Caco-2 (cell line): ENCODE measurements at regions of chr2 and their contacts with region 1.

Region 1: DNA sequence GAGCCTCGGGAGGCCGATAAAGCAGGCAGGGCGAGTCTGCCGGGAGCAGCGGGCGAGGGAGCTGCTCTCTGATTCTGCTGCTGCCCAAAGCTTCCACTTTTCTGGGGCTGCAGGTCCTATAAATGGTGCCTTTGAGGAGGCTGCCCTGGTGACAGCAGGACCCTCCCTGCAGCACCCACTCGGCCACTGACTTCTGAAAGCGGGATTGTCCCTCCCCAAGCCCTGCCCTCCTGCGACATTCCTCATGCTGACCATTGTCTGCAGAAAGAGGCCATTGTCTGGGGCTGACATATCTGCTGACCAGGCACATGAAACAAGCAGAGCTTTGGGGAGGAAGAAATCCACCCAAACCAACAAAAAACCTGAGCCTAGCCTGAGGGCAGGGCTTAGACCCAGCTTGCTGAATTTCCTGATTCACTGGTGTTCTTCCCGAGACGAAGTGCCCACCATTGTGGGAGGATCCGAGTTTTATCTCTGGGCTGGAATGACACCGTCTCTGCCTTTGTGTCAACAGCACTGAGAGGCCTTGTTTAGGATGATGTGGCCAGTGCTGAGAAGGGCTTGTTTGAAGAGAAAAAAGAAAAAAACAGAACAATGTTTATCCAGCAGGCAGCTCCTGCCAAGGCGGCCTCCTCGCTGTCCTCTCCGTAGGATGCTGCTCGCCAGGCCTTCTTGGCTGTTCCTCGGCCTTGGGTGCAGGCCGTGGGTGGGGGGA is 129.7 kb downstream of the MYCN start:
- DNase-seq: peak; percentile 68 to 77
- H3K4me3 ChIP-seq: no peak overlapping the region
- H3K4me3 Mint-ChIP-seq: no peak overlapping the region
- H3K27ac Mint-ChIP-seq: peak overlapping the region; percentile 81
- H3K4me1 ChIP-seq: peaks cover 45% of the 10 kb centered on the region
- H3K4me1 Mint-ChIP-seq: peaks cover 34% of the 10 kb centered on the region
- H3K27me3 ChIP-seq: no peaks in the 10 kb centered on the region
- H3K27me3 Mint-ChIP-seq: no peaks in the 10 kb centered on the region
- CTCF ChIP-seq: no peak

Region 2: GRCh38 chr2:16040271-16041010 is 29.6 kb before region 1 on chr2:
- CTCF ChIA-PET with region 1: no interaction called
- POLR2A ChIA-PET with region 1: no interaction called
- intact Hi-C with region 1: no loop called
- DNase-seq: no peak
- H3K4me3 ChIP-seq: no peak overlapping the region
- H3K4me3 Mint-ChIP-seq: no peak overlapping the region
- H3K27ac Mint-ChIP-seq: no peak overlapping the region
- H3K4me1 ChIP-seq: no peaks in the 10 kb centered on the region
- H3K4me1 Mint-ChIP-seq: peaks cover 9% of the 10 kb centered on the region
- H3K27me3 ChIP-seq: no peaks in the 10 kb centered on the region
- H3K27me3 Mint-ChIP-seq: no peaks in the 10 kb centered on the region
- CTCF ChIP-seq: no peak

Region 3: DNA sequence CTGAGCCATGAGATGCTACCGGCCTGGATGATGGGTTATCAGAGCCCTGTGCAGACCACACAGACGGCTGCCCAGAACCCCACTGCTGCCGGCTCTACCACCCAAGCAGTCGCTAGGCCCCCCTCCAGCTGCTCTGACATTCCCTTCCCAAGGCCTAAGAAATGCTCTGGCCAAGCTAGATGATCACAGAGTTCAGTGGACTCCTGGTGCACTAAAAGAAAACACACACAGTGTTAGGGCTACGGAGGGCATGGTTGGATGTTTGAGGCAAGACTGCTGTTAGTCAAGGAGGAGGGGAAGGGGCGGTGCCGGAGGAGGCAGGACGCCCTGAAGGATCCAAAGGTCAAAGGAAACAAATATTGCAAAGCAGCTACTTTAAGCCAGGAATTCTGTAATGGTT is 44.7 kb after region 1 on chr2:
- CTCF ChIA-PET with region 1: interaction called, 3 read pairs
- POLR2A ChIA-PET with region 1: no interaction called
- intact Hi-C with region 1: loop called (anchors 1 kb)
- DNase-seq: peak; percentile 83 to 88
- H3K4me3 ChIP-seq: no peak overlapping the region
- H3K4me3 Mint-ChIP-seq: no peak overlapping the region
- H3K27ac Mint-ChIP-seq: no peak overlapping the region
- H3K4me1 ChIP-seq: peaks cover 36% of the 10 kb centered on the region
- H3K4me1 Mint-ChIP-seq: peaks cover 12% of the 10 kb centered on the region
- H3K27me3 ChIP-seq: no peaks in the 10 kb centered on the region
- H3K27me3 Mint-ChIP-seq: no peaks in the 10 kb centered on the region
- CTCF ChIP-seq: no peak